Activated naive CD4-positive, alpha-beta T cell treated with anti-CD3 and anti-CD28 coated beads for 36 hours (primary cell): ENCODE measurements at regions of chr17 and their contacts with region 1.

Region 1: GRCh38 chr17:1516388-1517161 is at the start of gene INPP5K:
- DNase-seq: peak; percentile 98
- H3K4me3 Mint-ChIP-seq: peak within 1 kb of the TSS; percentile 80
- H3K27ac Mint-ChIP-seq: peak within 1 kb of the TSS; percentile 54
- H3K4me1 Mint-ChIP-seq: peaks cover 26% of the 10 kb centered on the region
- H3K27me3 Mint-ChIP-seq: no peaks in the 10 kb centered on the region
- total RNA-seq, gene INPP5K: 17.1 to 18.2 TPM

Region 2: GRCh38 chr17:1260086-1260769 is 256.3 kb before region 1 on chr17:
- CTCF ChIA-PET with region 1: interaction called, 5 read pairs
- intact Hi-C with region 1: loop called (anchors 1 kb)
- DNase-seq: no peak
- H3K4me3 Mint-ChIP-seq: no peak overlapping the region
- H3K27ac Mint-ChIP-seq: no peak overlapping the region
- H3K4me1 Mint-ChIP-seq: peaks cover 3% of the 10 kb centered on the region
- H3K27me3 Mint-ChIP-seq: peaks cover 5% of the 10 kb centered on the region

Region 3: GRCh38 chr17:1312261-1312870 is 204.2 kb before region 1 on chr17:
- CTCF ChIA-PET with region 1: no interaction called
- intact Hi-C with region 1: no loop called
- DNase-seq: peak; percentile 23
- H3K4me3 Mint-ChIP-seq: no peak overlapping the region
- H3K27ac Mint-ChIP-seq: no peak overlapping the region
- H3K4me1 Mint-ChIP-seq: no peaks in the 10 kb centered on the region
- H3K27me3 Mint-ChIP-seq: peaks cover 3% of the 10 kb centered on the region

Region 4: DNA sequence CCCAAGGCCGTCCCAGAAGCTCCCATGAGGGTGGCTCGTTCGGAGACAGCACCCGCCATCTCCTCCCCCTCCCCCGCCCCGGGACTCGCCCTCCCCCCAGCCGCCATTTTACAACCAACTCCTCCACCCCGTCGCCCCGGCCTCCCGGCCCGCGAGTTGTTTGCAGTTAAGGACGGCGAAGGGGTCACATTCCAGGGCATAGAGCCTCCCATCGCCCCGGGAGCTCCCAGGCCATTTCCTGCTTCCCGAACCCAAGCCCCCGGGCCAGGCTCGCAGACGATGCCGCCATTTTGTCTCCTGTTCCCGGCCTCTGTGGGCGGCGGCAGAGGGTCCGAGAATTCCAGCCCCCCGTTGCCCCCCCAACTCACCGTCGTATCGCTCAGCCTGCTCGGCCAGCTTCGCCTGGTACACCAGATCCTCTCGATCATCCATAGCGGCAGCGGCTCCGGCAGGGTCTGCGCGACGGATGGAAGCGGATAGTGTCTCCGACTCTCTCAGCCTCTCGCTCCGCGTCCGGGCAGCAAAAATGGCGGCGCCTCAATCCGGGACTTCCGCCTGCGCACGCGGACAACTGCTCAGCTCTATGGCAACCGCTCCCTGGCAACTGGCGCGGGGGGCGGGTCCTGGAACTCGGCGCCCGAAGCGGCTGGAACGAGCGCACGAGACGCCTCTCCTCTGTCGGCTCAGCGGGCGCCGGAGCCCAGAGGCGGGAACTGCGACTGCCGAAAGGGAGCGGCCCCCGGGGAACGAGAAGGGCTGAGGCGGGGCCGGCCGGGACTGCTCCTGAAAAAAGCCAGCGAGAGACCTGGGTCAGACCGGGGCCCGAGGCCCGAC is 116.7 kb before region 1 on chr17 and contains the start of gene YWHAE:
- CTCF ChIA-PET with region 1: no interaction called
- intact Hi-C with region 1: loop called (anchors 1 kb)
- DNase-seq: peak; percentile 98
- H3K4me3 Mint-ChIP-seq: peak within 1 kb of the TSS; percentile 99
- H3K27ac Mint-ChIP-seq: peak within 1 kb of the TSS; percentile 100
- H3K4me1 Mint-ChIP-seq: peaks cover 32% of the 10 kb centered on the region
- H3K27me3 Mint-ChIP-seq: no peaks in the 10 kb centered on the region
- total RNA-seq, gene YWHAE: 528 to 576 TPM

Region 5: GRCh38 chr17:1455797-1456599 is 60.6 kb before region 1 on chr17 and contains the start of gene CRK:
- CTCF ChIA-PET with region 1: interaction called, 3 read pairs
- intact Hi-C with region 1: loop called (anchors 1 kb)
- DNase-seq: peak; percentile 98
- H3K4me3 Mint-ChIP-seq: peak within 1 kb of the TSS; percentile 86
- H3K27ac Mint-ChIP-seq: peak within 1 kb of the TSS; percentile 81
- H3K4me1 Mint-ChIP-seq: peaks cover 57% of the 10 kb centered on the region
- H3K27me3 Mint-ChIP-seq: peaks cover under 1% of the 10 kb centered on the region
- total RNA-seq, gene CRK: 10.6 to 14.1 TPM

Region 6: GRCh38 chr17:1488030-1488863 is 28.3 kb before region 1 on chr17:
- CTCF ChIA-PET with region 1: no interaction called
- intact Hi-C with region 1: loop called (anchors 1 kb)
- DNase-seq: peak; percentile 59
- H3K4me3 Mint-ChIP-seq: peak overlapping the region; percentile 78
- H3K27ac Mint-ChIP-seq: no peak overlapping the region
- H3K4me1 Mint-ChIP-seq: peaks cover 32% of the 10 kb centered on the region
- H3K27me3 Mint-ChIP-seq: peaks cover 8% of the 10 kb centered on the region

Region 7: DNA sequence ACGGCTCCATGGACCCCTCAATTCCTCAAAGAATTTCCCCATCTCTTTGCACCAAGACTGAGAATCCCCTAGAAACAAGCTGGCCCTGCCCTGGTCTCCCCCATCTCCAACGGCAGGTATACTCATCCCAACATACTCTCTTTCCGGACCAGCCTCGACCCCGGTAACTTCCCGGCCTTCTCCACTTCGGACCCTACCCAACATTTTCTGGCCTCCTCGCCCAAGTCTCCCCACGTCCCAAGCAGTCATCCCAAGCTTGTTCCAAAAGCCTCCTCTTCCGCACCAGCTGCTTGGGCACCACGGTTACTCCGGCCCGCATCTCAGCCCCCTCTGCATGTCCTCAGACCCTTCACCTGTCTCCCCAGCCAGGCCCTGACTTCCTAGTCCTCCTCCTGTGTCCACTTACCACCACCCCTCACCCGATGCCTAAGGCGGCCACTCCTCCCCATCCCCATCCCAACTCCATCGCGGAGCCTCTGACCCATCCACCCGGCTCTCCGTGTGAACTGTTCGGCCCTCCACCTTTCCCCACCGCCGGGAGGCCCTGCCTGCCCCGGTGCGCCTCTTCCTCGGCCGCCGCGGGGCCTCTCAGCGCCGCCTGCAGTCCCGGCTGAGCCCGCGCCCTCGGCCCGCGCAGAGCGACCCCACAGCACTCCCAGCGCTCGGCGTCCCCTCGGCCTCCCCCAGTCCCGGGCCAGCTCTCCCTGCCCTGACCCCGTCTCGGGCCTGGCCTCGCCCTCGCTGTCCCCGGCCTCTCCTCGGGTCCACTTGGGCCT is 45.0 kb after region 1 on chr17:
- CTCF ChIA-PET with region 1: no interaction called
- intact Hi-C with region 1: loop called (anchors 2 kb)
- DNase-seq: peak; percentile 34
- H3K4me3 Mint-ChIP-seq: peak overlapping the region; percentile 82
- H3K27ac Mint-ChIP-seq: peak overlapping the region; percentile 71
- H3K4me1 Mint-ChIP-seq: peaks cover 40% of the 10 kb centered on the region
- H3K27me3 Mint-ChIP-seq: no peaks in the 10 kb centered on the region

Region 8: GRCh38 chr17:1573916-1574696 is 57.5 kb after region 1 on chr17:
- CTCF ChIA-PET with region 1: no interaction called
- intact Hi-C with region 1: no loop called
- DNase-seq: peak; percentile 69
- H3K4me3 Mint-ChIP-seq: no peak overlapping the region
- H3K27ac Mint-ChIP-seq: no peak overlapping the region
- H3K4me1 Mint-ChIP-seq: no peaks in the 10 kb centered on the region
- H3K27me3 Mint-ChIP-seq: no peaks in the 10 kb centered on the region

Region 9: GRCh38 chr17:1628856-1629646 is 112.5 kb after region 1 on chr17:
- CTCF ChIA-PET with region 1: interaction called, 9 read pairs
- intact Hi-C with region 1: loop called (anchors 1 kb)
- DNase-seq: peak; percentile 86
- H3K4me3 Mint-ChIP-seq: peak overlapping the region; percentile 83
- H3K27ac Mint-ChIP-seq: no peak overlapping the region
- H3K4me1 Mint-ChIP-seq: peaks cover 18% of the 10 kb centered on the region
- H3K27me3 Mint-ChIP-seq: peaks cover 15% of the 10 kb centered on the region